Esophagus muscularis mucosa (tissue), 4 donors: ENCODE measurements at regions of chr21 and their contacts with region 1.

Region 1: DNA sequence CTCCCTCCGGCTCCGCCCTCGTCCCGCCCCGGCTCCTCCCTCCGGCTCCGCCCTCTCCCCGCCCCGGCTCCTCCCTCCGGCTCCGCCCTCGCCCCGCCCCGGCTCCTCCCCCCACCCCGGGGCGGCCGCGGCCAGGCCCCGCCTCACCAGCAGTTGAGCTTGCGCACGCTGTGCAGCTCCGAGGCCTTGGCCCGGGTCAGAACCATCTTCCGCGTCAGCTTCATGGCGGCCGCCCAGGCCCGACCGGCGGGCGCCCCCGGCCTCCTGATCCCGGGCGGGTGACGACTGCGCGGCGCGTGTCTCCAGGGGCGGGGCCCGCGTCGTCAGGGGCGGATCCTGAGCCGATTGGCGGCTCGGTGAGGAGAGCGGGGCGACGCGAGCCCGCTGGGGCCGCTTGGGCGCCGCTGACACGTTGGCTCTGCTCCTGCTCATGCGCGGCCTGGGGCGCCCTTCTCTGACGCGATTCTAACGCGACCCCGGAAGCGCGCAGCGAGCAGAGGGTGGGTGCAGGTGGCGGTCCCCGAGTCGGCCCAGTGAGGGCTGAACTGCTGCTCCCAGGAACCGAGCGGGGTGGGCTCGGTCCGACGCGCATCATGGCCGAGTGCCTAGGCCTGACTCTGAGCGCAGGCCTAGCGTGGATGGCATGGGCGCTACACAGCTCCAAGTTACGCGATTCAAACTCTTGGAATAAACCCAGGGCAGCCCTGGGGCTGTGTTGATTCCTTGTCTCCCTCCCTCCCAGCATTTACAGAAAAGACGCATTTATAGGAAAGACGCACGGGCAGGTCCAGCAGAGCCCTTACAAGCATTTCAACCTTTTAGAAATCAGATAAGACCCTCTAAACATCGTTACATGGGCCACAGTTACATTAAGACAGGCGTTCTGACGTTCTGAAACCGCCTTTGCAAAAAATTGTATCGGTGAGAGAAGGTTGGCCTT is at the start of gene CFAP410:
- DNase-seq: peak; percentile 98
- H3K4me3 ChIP-seq: peak within 1 kb of the TSS; percentile 68 to 94 (median 75)
- H3K27ac ChIP-seq: peak within 1 kb of the TSS; percentile 96 to 99 (median 98)
- H3K4me1 ChIP-seq: peaks cover 10 to 25% (median 20%) of the 10 kb centered on the region in 4 donors
- H3K27me3 ChIP-seq: no peaks in the 10 kb centered on the region
- CTCF ChIP-seq: peak in 1 of 3 experiments; percentile 25
- EP300 ChIP-seq: no peak
- POLR2A ChIP-seq: peak; percentile 84
- total RNA-seq, gene CFAP410: 26.6 to 43.5 (median 32.3) TPM

Region 2: GRCh38 chr21:44299458-44300261 is 39.6 kb before region 1 on chr21 and contains the start of gene PFKL:
- intact Hi-C with region 1: loop called (anchors 2 kb)
- DNase-seq: no peak
- H3K4me3 ChIP-seq: peak within 1 kb of the TSS; percentile 93 to 98 (median 96)
- H3K27ac ChIP-seq: peak within 1 kb of the TSS; percentile 89 to 93 (median 93)
- H3K4me1 ChIP-seq: peaks cover 59 to 81% (median 70%) of the 10 kb centered on the region in 4 donors
- H3K27me3 ChIP-seq: peaks cover 0 to 25% (median 0%) of the 10 kb centered on the region in 4 donors
- CTCF ChIP-seq: no peak
- EP300 ChIP-seq: no peak
- POLR2A ChIP-seq: no peak
- total RNA-seq, gene PFKL: 61.5 to 109 (median 83.4) TPM

Region 3: GRCh38 chr21:44454747-44455523 is 115.7 kb after region 1 on chr21 and contains the start of gene LRRC3:
- intact Hi-C with region 1: loop called (anchors 5 kb)
- DNase-seq: peak; percentile 96
- H3K4me3 ChIP-seq: peak within 1 kb of the TSS; percentile 85 to 89 (median 88)
- H3K27ac ChIP-seq: peak within 1 kb of the TSS; percentile 57 to 73 (median 62)
- H3K4me1 ChIP-seq: peaks cover 7 to 24% (median 19%) of the 10 kb centered on the region in 4 donors
- H3K27me3 ChIP-seq: peaks cover 0 to 14% (median 0%) of the 10 kb centered on the region in 4 donors
- CTCF ChIP-seq: no peak
- EP300 ChIP-seq: no peak
- POLR2A ChIP-seq: no peak
- total RNA-seq, gene LRRC3: 3.3 to 6.6 (median 5.3) TPM